ENCODE measurements at regions of chr16 and their contacts with region 1.

Region 1: GRCh38 chr16:69482410-69482991 is 58.1 kb downstream of the CYB5B start:
- DNase-seq: peak; percentile 60 to 64
- H3K4me3 ChIP-seq: peak overlapping the region; percentile 15 to 59 (median 38)
- H3K27ac ChIP-seq: peak overlapping the region; percentile 88 to 94
- H3K4me1 ChIP-seq: peaks cover 3 to 7% of the 10 kb centered on the region in 2 donors
- H3K27me3 ChIP-seq: no peaks in the 10 kb centered on the region
- CTCF ChIP-seq: no peak
- POLR2A ChIP-seq: no peak

Region 2: GRCh38 chr16:68426351-68426660 is 1056.2 kb before region 1 on chr16:
- intact Hi-C with region 1: no loop called
- DNase-seq: peak in 1 of 2 donors; percentile 37
- H3K4me3 ChIP-seq: no peak overlapping the region
- H3K27ac ChIP-seq: peak overlapping the region; percentile 34 to 52
- H3K4me1 ChIP-seq: no peaks in the 10 kb centered on the region
- H3K27me3 ChIP-seq: no peaks in the 10 kb centered on the region
- CTCF ChIP-seq: no peak
- POLR2A ChIP-seq: no peak

Region 3: DNA sequence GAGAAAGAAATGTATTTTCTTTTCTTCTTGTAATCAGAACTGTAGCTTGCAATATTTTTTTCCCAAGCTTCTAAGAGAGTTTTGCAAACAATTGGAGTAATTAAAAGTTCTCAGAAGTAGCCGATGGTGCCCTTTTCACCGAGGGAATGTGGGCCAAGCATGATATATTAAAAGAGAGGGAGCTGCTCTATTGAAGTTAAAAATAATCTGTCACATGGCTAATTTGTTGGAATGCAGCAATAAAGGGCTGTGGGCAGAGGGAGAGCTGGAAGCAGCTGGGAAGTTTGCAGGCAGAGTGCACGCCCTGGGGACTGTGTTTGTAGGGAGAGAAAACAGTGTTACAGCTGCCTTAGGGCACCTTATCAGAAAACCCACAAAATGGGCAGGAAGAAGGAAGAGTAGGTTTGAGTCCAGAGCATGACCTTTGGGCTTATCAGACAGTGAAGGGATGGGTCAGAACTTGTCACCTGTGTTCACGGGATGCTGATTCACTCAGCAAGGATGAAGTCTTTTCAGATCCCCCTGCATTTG is 78.2 kb before region 1 on chr16:
- intact Hi-C with region 1: loop called (anchors 10 kb)
- DNase-seq: no peak
- H3K4me3 ChIP-seq: peak overlapping the region in 2 of 3 donors; percentile 4 to 7
- H3K27ac ChIP-seq: peak overlapping the region; percentile 43 to 56
- H3K4me1 ChIP-seq: no peaks in the 10 kb centered on the region
- H3K27me3 ChIP-seq: no peaks in the 10 kb centered on the region
- CTCF ChIP-seq: no peak
- POLR2A ChIP-seq: no peak

Measured in breast epithelium (tissue), 4 donors.